Caco-2 (cell line): ENCODE measurements at regions of chr4 and their contacts with region 1.

Region 1: GRCh38 chr4:82721819-82722423 is 76.7 kb downstream of the SCD5 start:
- DNase-seq: peak; percentile 48 to 61
- H3K4me3 ChIP-seq: no peak overlapping the region
- H3K4me3 Mint-ChIP-seq: no peak overlapping the region
- H3K27ac Mint-ChIP-seq: no peak overlapping the region
- H3K4me1 ChIP-seq: no peaks in the 10 kb centered on the region
- H3K4me1 Mint-ChIP-seq: no peaks in the 10 kb centered on the region
- H3K27me3 ChIP-seq: no peaks in the 10 kb centered on the region
- H3K27me3 Mint-ChIP-seq: no peaks in the 10 kb centered on the region
- CTCF ChIP-seq: peak; percentile 55 to 81

Region 2: GRCh38 chr4:82469791-82470345 is 252.1 kb before region 1 on chr4:
- CTCF ChIA-PET with region 1: no interaction called
- POLR2A ChIA-PET with region 1: no interaction called
- intact Hi-C with region 1: no loop called
- DNase-seq: no peak
- H3K4me3 ChIP-seq: no peak overlapping the region
- H3K4me3 Mint-ChIP-seq: no peak overlapping the region
- H3K27ac Mint-ChIP-seq: no peak overlapping the region
- H3K4me1 ChIP-seq: no peaks in the 10 kb centered on the region
- H3K4me1 Mint-ChIP-seq: no peaks in the 10 kb centered on the region
- H3K27me3 ChIP-seq: no peaks in the 10 kb centered on the region
- H3K27me3 Mint-ChIP-seq: no peaks in the 10 kb centered on the region
- CTCF ChIP-seq: no peak

Region 3: DNA sequence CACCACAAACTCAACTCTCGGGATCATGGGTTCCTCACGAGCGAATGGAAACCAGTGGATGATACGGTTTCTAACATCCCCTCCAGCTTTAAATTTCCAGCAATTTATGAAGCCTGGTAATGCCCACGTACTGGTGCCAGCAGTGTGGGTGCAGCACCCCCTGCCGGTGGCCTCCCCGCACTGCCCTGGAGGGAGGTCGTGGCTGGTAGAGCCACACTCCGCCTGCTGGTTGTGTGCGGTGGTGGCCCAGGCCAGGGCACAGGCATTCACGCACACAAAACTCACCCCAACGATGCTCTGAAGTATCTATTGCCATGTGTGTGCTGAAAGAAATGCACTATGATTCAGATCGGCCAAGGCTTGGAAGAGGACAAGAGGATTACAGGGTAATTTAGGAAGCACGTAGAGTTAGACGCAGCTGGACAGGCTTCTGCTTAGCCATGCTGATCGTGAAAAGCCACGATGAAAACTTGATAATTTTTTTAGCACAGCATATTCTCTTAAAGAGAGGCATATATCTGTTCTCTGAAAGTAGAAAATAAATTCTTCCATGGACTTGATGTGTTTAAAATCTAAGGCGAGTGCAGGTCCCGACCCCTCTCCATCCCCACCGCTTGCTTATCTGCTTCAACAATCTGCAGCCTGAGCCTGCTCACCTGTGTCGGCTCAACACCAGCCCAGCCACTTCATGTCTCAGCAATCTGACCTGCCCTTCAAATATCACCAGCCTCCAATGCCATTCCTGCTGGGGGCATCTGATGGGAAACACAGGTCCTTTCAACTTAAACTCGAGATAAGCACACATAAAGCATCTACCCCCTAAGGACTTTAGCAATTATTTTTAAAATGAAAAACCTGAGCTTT is 17.6 kb after region 1 on chr4:
- CTCF ChIA-PET with region 1: interaction called, 5 read pairs
- POLR2A ChIA-PET with region 1: no interaction called
- intact Hi-C with region 1: loop called (anchors 1 kb)
- DNase-seq: peak in 1 of 2 experiments; percentile 75
- H3K4me3 ChIP-seq: no peak overlapping the region
- H3K4me3 Mint-ChIP-seq: no peak overlapping the region
- H3K27ac Mint-ChIP-seq: no peak overlapping the region
- H3K4me1 ChIP-seq: no peaks in the 10 kb centered on the region
- H3K4me1 Mint-ChIP-seq: no peaks in the 10 kb centered on the region
- H3K27me3 ChIP-seq: no peaks in the 10 kb centered on the region
- H3K27me3 Mint-ChIP-seq: no peaks in the 10 kb centered on the region
- CTCF ChIP-seq: peak; percentile 71 to 80

Region 4: GRCh38 chr4:82798168-82799005 is 76.5 kb after region 1 on chr4 and contains the start of gene SCD5:
- CTCF ChIA-PET with region 1: interaction called, 3 read pairs
- POLR2A ChIA-PET with region 1: no interaction called
- intact Hi-C with region 1: loop called (anchors 1 kb)
- DNase-seq: peak; percentile 42 to 51
- H3K4me3 ChIP-seq: peak within 1 kb of the TSS; percentile 64
- H3K4me3 Mint-ChIP-seq: peak within 1 kb of the TSS; percentile 74
- H3K27ac Mint-ChIP-seq: no peak within 1 kb of the TSS
- H3K4me1 ChIP-seq: no peaks in the 10 kb centered on the region
- H3K4me1 Mint-ChIP-seq: no peaks in the 10 kb centered on the region
- H3K27me3 ChIP-seq: no peaks in the 10 kb centered on the region
- H3K27me3 Mint-ChIP-seq: peaks cover 5% of the 10 kb centered on the region
- CTCF ChIP-seq: no peak
- total RNA-seq, gene SCD5: 2.7 and 3.4 TPM in 2 replicates

Region 5: DNA sequence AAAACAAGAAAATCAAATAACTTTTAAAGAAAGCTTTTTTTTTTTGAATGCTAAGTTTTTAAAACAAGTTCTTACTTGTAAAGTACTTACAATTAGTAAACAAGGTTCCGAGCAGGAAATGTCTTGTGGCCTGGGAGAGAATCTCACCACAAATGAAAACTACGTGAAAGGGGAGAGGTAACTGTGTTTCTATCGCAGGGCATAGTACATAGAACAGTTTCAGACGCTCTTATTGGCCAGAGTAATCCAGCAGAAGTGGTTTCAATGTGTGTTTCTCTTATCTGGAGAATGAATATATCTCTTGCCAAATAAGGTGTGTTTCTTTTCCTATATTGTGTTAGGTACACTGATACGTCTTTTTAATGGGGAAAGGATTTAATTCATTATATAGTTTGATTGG is 392.7 kb after region 1 on chr4 and contains the start of gene PLAC8:
- CTCF ChIA-PET with region 1: no interaction called
- POLR2A ChIA-PET with region 1: no interaction called
- intact Hi-C with region 1: no loop called
- DNase-seq: no peak
- H3K4me3 ChIP-seq: peak within 1 kb of the TSS; percentile 37
- H3K4me3 Mint-ChIP-seq: peak within 1 kb of the TSS; percentile 58
- H3K27ac Mint-ChIP-seq: peak within 1 kb of the TSS; percentile 83
- H3K4me1 ChIP-seq: peaks cover 33% of the 10 kb centered on the region
- H3K4me1 Mint-ChIP-seq: peaks cover 38% of the 10 kb centered on the region
- H3K27me3 ChIP-seq: no peaks in the 10 kb centered on the region
- H3K27me3 Mint-ChIP-seq: no peaks in the 10 kb centered on the region
- CTCF ChIP-seq: no peak
- total RNA-seq, gene PLAC8: 13.6 and 23.0 TPM in 2 replicates